ENCODE measurements at regions of chr4 and their contacts with region 1.

Region 1: DNA sequence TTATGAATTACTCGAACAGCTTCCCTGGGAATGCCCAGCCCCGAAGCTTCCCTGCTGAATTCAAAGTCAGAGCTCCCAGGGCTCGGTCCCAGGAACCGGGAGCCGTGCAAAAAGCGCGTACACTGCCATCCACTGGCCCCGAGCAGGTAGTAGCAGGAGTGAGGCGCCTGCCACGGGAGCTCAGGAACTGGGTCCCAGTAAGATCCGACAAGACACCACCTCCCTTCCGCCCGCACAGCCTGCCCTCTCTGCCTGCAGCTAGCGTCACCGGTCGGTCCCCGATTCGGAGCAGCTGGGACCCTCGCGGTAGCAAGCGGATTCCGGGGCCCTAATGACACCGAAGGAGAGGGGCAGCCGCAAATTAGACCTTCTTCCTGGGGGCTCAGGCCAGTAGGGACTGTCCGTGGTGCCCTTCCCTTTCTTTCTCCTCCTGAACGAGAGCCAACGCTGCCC is 1.2 kb downstream of the CORIN start:
- DNase-seq: peak; percentile 60
- H3K4me3 ChIP-seq: peak overlapping the region; percentile 67
- H3K27ac ChIP-seq: no peak overlapping the region
- H3K27me3 ChIP-seq: no peaks in the 10 kb centered on the region
- CTCF ChIP-seq: peak; percentile 81

Region 2: GRCh38 chr4:47349326-47349725 is 487.3 kb before region 1 on chr4:
- CTCF ChIA-PET with region 1: no interaction called
- POLR2A ChIA-PET with region 1: no interaction called
- DNase-seq: peak; percentile 41
- H3K4me3 ChIP-seq: no peak overlapping the region
- H3K27ac ChIP-seq: peak overlapping the region; percentile 59
- H3K27me3 ChIP-seq: no peaks in the 10 kb centered on the region
- CTCF ChIP-seq: no peak

Region 3: DNA sequence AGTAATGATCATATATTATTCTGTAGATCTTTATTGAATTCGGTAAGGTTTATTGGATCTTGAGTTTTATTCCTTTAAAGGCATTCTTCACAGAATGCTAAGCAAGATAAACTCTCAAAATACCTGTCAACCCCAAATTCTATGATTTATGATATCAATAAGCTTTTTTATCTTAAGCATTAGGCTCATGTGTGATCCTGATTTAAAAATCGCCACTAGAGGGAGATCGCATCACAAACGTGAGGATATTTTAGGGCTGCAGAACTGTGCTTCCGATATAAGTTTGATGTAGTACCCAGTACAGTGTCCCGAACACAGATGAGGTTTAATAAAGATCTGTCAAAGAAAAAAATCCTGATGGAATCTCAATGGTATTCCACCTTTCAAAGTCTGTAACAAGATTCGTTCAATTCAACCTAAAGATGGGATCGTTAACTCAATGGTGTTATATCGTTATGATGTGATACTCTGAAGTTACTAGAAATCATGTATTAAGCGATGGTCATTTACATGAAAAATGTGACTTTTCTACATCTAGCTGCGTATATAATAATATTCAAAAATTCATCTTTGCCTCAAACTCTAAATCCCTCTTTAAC is 167.8 kb before region 1 on chr4:
- CTCF ChIA-PET with region 1: interaction called, 35 read pairs
- POLR2A ChIA-PET with region 1: interaction called, 4 read pairs
- DNase-seq: peak; percentile 16
- H3K4me3 ChIP-seq: no peak overlapping the region
- H3K27ac ChIP-seq: no peak overlapping the region
- H3K27me3 ChIP-seq: no peaks in the 10 kb centered on the region
- CTCF ChIP-seq: peak; percentile 79

Region 4: DNA sequence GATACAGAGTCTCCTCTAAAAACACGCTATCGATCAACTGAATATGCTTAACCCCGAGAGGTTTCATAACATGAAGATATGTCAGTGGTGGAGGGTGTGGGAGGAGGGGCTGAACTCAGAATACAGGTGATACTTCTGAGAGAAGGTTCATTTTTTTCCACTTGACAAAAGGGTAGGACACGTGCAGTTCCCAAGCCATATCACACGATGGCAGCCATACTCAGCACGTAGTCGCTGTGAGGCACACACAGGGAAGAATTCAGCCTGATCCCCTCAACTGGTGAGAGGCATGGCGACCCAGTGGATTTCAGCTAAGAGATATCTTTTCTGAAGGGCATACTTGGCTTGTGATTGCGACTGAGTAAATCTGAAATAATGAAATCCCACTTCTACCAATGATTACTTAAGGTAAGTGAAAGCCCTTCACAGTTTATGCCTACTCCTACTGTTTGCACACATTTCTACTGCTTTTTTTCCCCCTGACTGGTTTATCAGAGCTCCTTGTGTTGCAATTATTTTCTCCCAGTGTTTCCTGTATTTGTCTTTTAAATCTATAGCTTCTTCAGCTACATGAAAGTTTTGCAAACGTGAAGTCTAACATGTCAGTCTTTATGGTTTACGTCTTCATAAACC is 131.9 kb before region 1 on chr4:
- CTCF ChIA-PET with region 1: interaction called, 61 read pairs
- POLR2A ChIA-PET with region 1: no interaction called
- DNase-seq: peak; percentile 7
- H3K4me3 ChIP-seq: no peak overlapping the region
- H3K27ac ChIP-seq: no peak overlapping the region
- H3K27me3 ChIP-seq: peaks cover 3% of the 10 kb centered on the region
- CTCF ChIP-seq: peak; percentile 47

Region 5: DNA sequence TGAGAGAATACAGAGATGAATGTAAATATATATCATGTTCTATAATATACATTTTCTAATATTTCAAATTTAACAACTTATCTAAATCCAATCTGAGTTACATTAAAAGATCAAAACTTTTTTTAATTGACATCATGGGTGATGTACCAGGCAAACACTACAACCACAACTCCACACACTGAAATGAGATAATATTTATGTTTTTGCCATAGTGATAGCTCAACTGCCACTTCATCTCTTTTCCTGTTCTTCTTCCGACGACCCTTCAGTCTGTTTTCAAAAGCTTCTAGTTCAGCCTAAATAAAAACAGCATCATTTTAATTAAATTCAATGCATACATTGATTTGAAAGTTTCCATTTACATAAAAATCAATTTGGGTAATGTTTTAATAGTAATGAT is 11.4 kb after region 1 on chr4:
- CTCF ChIA-PET with region 1: interaction called, 18 read pairs
- POLR2A ChIA-PET with region 1: interaction called, 4 read pairs
- DNase-seq: no peak
- H3K4me3 ChIP-seq: no peak overlapping the region
- H3K27ac ChIP-seq: no peak overlapping the region
- H3K27me3 ChIP-seq: no peaks in the 10 kb centered on the region
- CTCF ChIP-seq: no peak

Region 6: GRCh38 chr4:47933840-47934239 is 97.2 kb after region 1 on chr4:
- CTCF ChIA-PET with region 1: interaction called, 16 read pairs
- POLR2A ChIA-PET with region 1: no interaction called
- DNase-seq: peak; percentile 23
- H3K4me3 ChIP-seq: no peak overlapping the region
- H3K27ac ChIP-seq: no peak overlapping the region
- H3K27me3 ChIP-seq: peaks cover 6% of the 10 kb centered on the region
- CTCF ChIP-seq: peak; percentile 65